Ascending aorta (tissue), 2 donors: ENCODE measurements at regions of chr19 and their contacts with region 1.

Region 1: DNA sequence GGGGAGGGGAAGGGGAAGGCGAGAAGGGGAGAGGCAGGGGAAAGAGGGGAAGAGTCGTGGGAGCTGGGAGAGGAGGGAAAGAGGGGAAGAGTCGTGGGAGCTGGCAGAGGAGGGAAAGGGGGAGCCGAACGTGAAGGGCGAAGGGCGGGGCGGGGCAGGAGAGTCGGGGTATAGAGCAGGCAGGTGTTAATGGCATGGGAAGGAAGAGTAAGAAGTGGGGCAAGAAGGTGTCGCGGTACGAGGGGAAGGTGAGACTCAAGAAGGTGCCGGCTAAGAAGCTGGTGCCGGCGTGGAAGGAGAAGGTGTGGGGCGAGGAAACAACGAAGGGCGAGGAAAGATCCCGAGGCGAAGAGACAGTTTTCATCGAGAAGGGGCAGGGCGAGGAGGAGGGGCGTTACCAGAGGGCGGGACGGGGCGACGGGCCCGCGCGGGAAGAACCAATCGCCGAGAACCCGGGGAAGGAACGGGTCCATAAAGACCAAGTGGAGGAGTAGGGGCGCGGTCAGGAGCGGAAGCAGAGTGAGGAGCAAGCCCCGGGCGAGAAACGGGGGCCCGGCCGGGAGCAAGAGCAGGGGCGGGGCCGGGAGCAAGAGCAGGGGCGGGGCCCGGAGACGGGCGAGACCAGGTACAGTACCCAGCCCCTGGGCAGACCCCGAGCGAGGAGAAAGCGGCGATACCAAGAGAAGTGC is 463 bp downstream of the CATSPERG start:
- DNase-seq: peak; percentile 90 to 98
- H3K4me3 ChIP-seq: peak overlapping the region; percentile 70 to 72
- H3K27ac ChIP-seq: peak overlapping the region; percentile 96 to 99
- H3K4me1 ChIP-seq: peaks cover 0 to 18% of the 10 kb centered on the region in 2 donors
- H3K27me3 ChIP-seq: no peaks in the 10 kb centered on the region
- CTCF ChIP-seq: no peak

Region 2: DNA sequence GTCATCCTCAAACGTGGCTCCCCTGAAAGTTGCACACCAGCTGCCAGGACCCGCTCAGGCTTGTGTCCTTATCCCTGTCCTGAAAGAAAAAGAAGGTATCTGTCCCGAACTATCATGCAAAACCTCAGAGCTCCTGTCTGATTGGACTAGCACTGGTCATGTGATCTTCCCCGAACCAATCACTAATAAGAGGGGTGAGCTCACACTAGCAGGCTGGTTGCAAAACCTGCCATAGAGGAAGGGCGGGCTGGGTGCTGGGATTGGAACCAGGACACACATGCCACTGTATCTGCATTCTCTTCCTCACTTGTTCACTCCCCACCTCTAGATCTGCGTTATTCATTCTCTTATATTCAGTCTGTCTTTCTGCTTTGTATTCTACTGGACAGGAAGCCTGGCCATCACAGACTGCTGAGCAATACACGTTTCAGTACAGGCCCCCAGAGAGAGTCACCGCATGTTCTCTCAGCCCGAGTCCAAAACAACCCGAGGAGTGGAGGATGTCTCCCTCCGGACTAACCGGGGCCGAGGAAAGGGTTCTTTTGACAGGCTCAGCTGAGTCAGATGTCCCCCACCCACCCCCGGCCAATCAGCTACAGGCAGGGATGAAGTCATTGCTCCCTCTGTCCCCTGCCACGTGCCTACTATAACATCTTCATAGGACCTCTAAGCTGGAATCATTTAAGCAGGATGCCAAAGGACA is 331.4 kb before region 1 on chr19:
- intact Hi-C with region 1: loop called (anchors 5 kb)
- DNase-seq: peak; percentile 77 to 92
- H3K4me3 ChIP-seq: peak overlapping the region; percentile 54 to 62
- H3K27ac ChIP-seq: peak overlapping the region; percentile 81 to 83
- H3K4me1 ChIP-seq: peaks cover 0 to 18% of the 10 kb centered on the region in 2 donors
- H3K27me3 ChIP-seq: no peaks in the 10 kb centered on the region
- CTCF ChIP-seq: no peak

Region 3: DNA sequence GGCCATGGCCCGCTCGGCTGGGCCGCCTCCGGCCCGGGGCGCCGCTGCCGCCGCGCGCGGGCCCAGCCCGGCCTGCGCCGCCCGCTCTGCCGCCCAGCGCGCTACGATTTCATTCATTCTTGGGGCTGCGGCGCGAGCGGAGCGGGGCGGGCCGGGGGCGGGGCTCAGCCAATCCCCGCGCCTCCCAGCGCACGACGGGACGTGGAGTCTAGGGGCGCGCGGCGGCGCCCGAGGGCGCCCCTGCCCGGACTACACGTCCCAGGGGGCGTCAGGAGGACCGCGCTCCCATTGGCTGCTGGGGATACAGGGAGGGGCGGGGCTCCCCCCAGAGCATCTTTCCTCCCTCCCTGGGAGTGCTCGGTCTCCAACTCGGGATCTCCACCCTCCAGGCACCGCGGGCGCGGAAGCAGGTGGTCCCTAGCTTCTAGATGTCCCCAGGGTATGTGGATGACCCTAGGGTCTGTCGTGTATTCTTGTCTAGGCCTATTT is 106.5 kb before region 1 on chr19:
- intact Hi-C with region 1: loop called (anchors 2 kb)
- DNase-seq: peak in 1 of 2 donors; percentile 77
- H3K4me3 ChIP-seq: peak overlapping the region in 1 of 2 donors; percentile 45
- H3K27ac ChIP-seq: no peak overlapping the region
- H3K4me1 ChIP-seq: peaks cover 11 to 12% of the 10 kb centered on the region in 2 donors
- H3K27me3 ChIP-seq: peaks cover 32% of the 10 kb centered on the region
- CTCF ChIP-seq: no peak

Region 4: GRCh38 chr19:38315657-38316476 is 20.2 kb before region 1 on chr19 and contains the start of gene YIF1B:
- intact Hi-C with region 1: loop called (anchors 1 kb)
- DNase-seq: peak; percentile 97 to 99
- H3K4me3 ChIP-seq: peak within 1 kb of the TSS; percentile 68 to 70
- H3K27ac ChIP-seq: peak within 1 kb of the TSS; percentile 79 to 85
- H3K4me1 ChIP-seq: peaks cover 7 to 25% of the 10 kb centered on the region in 2 donors
- H3K27me3 ChIP-seq: no peaks in the 10 kb centered on the region
- CTCF ChIP-seq: no peak
- total RNA-seq, gene YIF1B: 24.7 TPM

Region 5: DNA sequence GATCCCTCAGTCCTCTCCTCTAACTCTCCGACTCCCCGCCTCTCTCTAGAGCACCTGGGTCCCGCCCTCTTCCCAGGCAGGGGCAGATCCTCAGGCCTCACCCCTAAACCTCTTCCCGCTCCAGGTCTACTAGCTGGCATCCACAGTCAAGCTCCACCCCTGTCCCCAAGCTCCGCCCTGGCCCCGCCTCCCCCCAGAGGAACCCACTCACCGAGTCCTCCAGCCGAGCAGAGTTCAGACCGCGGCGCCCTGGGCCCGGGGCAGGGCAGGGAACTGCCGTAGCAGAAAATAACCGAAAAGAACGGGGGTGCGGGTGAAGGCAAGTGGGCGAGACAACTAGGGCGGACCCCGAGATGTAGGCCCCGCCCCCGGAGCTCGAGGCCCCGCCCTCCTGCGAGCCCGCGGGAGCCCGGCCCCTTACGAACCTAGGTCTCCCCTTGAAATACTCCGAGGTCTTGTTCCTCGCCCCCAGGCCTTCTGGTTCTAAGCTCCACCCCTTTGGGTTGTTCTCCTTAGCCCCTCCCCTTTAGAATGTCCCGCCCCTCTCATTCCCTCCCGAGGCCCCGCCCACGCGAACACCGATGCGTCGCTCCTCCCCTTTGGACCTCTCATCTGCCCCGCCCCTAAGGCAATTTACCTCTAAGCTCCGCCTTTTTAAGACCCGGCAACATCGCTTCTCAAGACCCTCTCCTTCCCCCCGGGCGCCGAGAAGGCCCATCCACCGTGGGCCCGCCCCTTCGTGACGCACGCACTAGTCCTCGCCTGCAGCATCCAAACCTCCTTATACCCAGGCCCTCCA is 51.7 kb after region 1 on chr19 and contains the start of gene GGN:
- intact Hi-C with region 1: loop called (anchors 5 kb)
- DNase-seq: peak; percentile 75 to 95
- H3K4me3 ChIP-seq: peak within 1 kb of the TSS; percentile 58 to 94
- H3K27ac ChIP-seq: peak within 1 kb of the TSS; percentile 91 to 97
- H3K4me1 ChIP-seq: peaks cover 6 to 20% of the 10 kb centered on the region in 2 donors
- H3K27me3 ChIP-seq: no peaks in the 10 kb centered on the region
- CTCF ChIP-seq: no peak
- total RNA-seq, gene GGN: 46.9 TPM